Activated CD8-positive, alpha-beta T cell treated with anti-CD3 and anti-CD28 coated beads for 36 hours (primary cell): ENCODE measurements at regions of chr2 and their contacts with region 1.

Region 1: DNA sequence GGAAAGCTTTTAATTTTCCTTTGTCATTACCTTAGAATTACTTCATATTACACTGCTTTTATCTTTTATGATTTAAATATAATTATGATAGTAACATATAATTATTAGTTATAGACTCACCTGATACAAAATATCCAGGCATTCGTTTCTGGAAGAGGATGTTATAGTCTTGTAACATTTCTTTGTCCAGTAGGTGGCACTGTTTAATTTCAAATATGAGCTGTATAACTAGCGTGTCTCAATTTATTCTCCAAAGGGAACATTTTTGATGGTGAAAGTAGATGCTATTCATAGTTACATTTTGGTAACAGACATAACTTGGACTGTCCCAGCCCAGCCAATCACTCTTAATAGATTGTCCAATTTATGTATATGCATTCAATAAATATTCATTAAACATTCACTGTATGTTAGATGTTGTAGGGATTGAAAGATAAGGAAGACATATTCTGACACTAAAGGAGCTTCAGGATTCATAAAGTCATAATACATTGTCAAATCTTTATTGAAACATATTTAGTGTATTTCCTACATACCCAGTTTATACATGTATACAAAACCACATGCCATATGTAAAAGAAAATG is 19.2 kb downstream of the DAW1 start:
- DNase-seq: no peak
- ATAC-seq: no peak
- H3K4me3 Mint-ChIP-seq: no peak overlapping the region
- H3K27ac Mint-ChIP-seq: no peak overlapping the region
- H3K4me1 Mint-ChIP-seq: no peaks in the 10 kb centered on the region
- H3K27me3 Mint-ChIP-seq: peaks cover 1% of the 10 kb centered on the region
- CTCF ChIP-seq: peak; percentile 75

Region 2: GRCh38 chr2:227570615-227571014 is 320.0 kb before region 1 on chr2:
- CTCF ChIA-PET with region 1: no interaction called
- POLR2A ChIA-PET with region 1: no interaction called
- intact Hi-C with region 1: no loop called
- DNase-seq: no peak
- ATAC-seq: no peak
- H3K4me3 Mint-ChIP-seq: no peak overlapping the region
- H3K27ac Mint-ChIP-seq: no peak overlapping the region
- H3K4me1 Mint-ChIP-seq: peaks cover 3% of the 10 kb centered on the region
- H3K27me3 Mint-ChIP-seq: no peaks in the 10 kb centered on the region
- CTCF ChIP-seq: no peak

Region 3: GRCh38 chr2:227903381-227903780 is 12.8 kb after region 1 on chr2:
- CTCF ChIA-PET with region 1: interaction called, 10 read pairs
- POLR2A ChIA-PET with region 1: no interaction called
- intact Hi-C with region 1: no loop called
- DNase-seq: no peak
- ATAC-seq: no peak
- H3K4me3 Mint-ChIP-seq: no peak overlapping the region
- H3K27ac Mint-ChIP-seq: no peak overlapping the region
- H3K4me1 Mint-ChIP-seq: no peaks in the 10 kb centered on the region
- H3K27me3 Mint-ChIP-seq: peaks cover 7% of the 10 kb centered on the region
- CTCF ChIP-seq: no peak

Region 4: GRCh38 chr2:227921648-227922047 is 31.1 kb after region 1 on chr2:
- CTCF ChIA-PET with region 1: no interaction called
- POLR2A ChIA-PET with region 1: no interaction called
- intact Hi-C with region 1: no loop called
- DNase-seq: no peak
- ATAC-seq: no peak
- H3K4me3 Mint-ChIP-seq: no peak overlapping the region
- H3K27ac Mint-ChIP-seq: no peak overlapping the region
- H3K4me1 Mint-ChIP-seq: no peaks in the 10 kb centered on the region
- H3K27me3 Mint-ChIP-seq: peaks cover 1% of the 10 kb centered on the region
- CTCF ChIP-seq: no peak

Region 5: DNA sequence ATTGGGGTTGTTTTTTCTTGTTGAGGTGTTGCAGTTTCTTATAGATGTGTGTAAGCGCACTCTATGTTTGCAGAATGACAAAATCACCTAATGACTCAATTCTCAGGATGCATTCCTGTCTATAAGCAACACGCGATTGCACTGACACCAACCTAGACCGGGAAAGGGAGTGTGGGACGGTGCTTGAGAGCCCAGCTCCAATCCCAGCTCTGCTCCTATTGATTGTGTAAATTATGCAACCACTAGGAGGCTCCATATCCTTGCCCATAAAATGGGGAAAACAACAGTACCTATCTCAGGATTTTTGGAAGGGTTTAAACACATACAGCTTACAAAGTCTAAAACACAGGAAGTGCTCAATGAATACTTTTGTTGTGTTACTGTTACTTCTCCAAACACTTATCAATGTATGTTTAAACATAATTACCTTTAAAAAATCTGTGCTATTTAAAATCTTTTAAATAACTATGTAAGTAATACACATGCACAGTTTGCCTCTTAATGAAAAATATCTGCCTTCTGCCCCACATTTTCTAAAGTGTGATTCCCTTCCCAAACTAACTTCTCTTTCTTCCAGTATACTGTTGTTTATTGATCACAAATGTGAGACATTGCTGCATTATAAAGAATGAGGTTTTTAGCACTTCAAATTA is 158.4 kb after region 1 on chr2:
- CTCF ChIA-PET with region 1: no interaction called
- POLR2A ChIA-PET with region 1: no interaction called
- intact Hi-C with region 1: no loop called
- DNase-seq: peak; percentile 2
- ATAC-seq: no peak
- H3K4me3 Mint-ChIP-seq: no peak overlapping the region
- H3K27ac Mint-ChIP-seq: no peak overlapping the region
- H3K4me1 Mint-ChIP-seq: no peaks in the 10 kb centered on the region
- H3K27me3 Mint-ChIP-seq: no peaks in the 10 kb centered on the region
- CTCF ChIP-seq: peak; percentile 18

Region 6: GRCh38 chr2:229273723-229274338 is 1383.2 kb after region 1 on chr2:
- CTCF ChIA-PET with region 1: interaction called, 15 read pairs
- POLR2A ChIA-PET with region 1: no interaction called
- intact Hi-C with region 1: no loop called
- DNase-seq: peak; percentile 5
- ATAC-seq: no peak
- H3K4me3 Mint-ChIP-seq: no peak overlapping the region
- H3K27ac Mint-ChIP-seq: no peak overlapping the region
- H3K4me1 Mint-ChIP-seq: no peaks in the 10 kb centered on the region
- H3K27me3 Mint-ChIP-seq: peaks cover 18% of the 10 kb centered on the region
- CTCF ChIP-seq: peak; percentile 58

Region 7: GRCh38 chr2:229586746-229587705 is 1696.4 kb after region 1 on chr2:
- CTCF ChIA-PET with region 1: interaction called, 10 read pairs
- POLR2A ChIA-PET with region 1: no interaction called
- intact Hi-C with region 1: no loop called
- DNase-seq: peak; percentile 55
- ATAC-seq: peak; percentile 61
- H3K4me3 Mint-ChIP-seq: no peak overlapping the region
- H3K27ac Mint-ChIP-seq: no peak overlapping the region
- H3K4me1 Mint-ChIP-seq: no peaks in the 10 kb centered on the region
- H3K27me3 Mint-ChIP-seq: peaks cover 15% of the 10 kb centered on the region
- CTCF ChIP-seq: peak; percentile 63